ENCODE measurements at regions of chr12 and their contacts with region 1.

Region 1: DNA sequence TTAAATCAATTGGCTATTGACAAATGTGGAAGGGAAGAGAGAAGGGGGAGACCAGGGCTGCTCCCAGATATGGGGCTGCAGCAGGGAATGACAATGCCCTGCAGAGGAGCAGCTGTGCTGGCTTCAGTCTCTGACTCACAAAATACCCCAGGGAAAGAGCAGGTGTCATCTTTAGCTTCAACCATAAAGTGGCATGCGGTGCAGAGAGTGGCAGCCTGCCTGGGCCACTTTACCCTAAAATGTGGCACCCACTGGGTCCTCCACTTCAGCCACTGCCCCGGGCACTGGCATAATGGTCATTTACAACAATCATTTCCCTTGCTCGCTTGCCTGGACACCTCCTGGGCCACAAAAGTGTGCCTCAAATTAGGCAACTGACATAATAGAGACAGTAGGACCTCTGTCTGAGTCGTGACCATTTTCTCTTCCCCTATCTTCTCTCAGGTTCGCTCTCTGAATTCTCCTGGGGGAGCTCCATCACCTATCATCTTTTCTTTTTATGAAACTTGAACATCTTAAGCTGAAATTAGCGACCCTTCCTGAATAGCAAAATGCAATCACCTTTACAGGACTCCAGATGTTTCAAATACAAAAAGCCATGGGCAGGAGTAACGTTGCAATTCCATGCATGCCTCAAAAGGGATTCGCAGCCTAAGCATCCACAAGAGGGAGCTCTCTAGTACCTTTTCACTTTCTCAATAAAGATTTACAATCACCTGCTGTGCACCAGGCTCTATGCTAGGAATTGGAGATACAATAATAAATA is 179.9 kb upstream of the ATF7IP start:
- DNase-seq: peak; percentile 38
- ATAC-seq: peak; percentile 83
- H3K4me3 ChIP-seq: no peak overlapping the region
- H3K27ac ChIP-seq: no peak overlapping the region
- H3K4me1 ChIP-seq: no peaks in the 10 kb centered on the region
- H3K27me3 ChIP-seq: no peaks in the 10 kb centered on the region
- CTCF ChIP-seq: peak; percentile 62
- POLR2A ChIP-seq: no peak
- RAD21 ChIP-seq: peak; percentile 50; the same call in 1 of the 2 replicates

Region 2: DNA sequence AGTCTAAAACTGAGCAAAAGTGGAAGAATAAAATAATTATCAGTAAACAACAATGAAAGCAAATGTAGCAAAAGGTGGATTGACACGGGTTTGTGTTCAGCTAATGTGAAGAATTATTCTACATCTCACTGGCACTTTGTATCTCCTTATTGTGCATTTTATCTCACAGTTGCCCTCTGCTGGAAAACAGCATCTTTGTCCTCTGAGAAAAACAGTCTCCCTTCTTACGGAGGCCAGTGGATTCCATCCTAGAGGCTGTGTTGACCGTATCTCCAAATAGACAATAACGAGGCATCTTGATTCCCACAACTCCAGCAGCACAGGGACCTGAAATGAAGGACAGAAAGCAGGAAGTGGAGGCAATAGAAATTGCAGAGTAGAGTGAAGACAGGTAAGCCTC is 433.4 kb after region 1 on chr12:
- CTCF ChIA-PET with region 1: no interaction called
- POLR2A ChIA-PET with region 1: no interaction called
- dilution Hi-C with region 1: no loop called
- in situ Hi-C with region 1: no loop called
- intact Hi-C with region 1: loop called (anchors 2 kb)
- DNase-seq: peak; percentile 16
- ATAC-seq: peak; percentile 56; the same call in 1 of the 2 replicates
- H3K4me3 ChIP-seq: no peak overlapping the region
- H3K27ac ChIP-seq: no peak overlapping the region
- H3K4me1 ChIP-seq: no peaks in the 10 kb centered on the region
- H3K27me3 ChIP-seq: no peaks in the 10 kb centered on the region
- CTCF ChIP-seq: peak; percentile 42
- POLR2A ChIP-seq: no peak
- RAD21 ChIP-seq: peak; percentile 39; the same call in 1 of the 2 replicates

Region 3: GRCh38 chr12:14664510-14664909 is 478.9 kb after region 1 on chr12:
- CTCF ChIA-PET with region 1: no interaction called
- POLR2A ChIA-PET with region 1: no interaction called
- dilution Hi-C with region 1: no loop called
- in situ Hi-C with region 1: no loop called
- intact Hi-C with region 1: loop called (anchors 1 kb)
- DNase-seq: peak; percentile 35
- ATAC-seq: peak; percentile 72; the same call in 1 of the 2 replicates
- H3K4me3 ChIP-seq: no peak overlapping the region
- H3K27ac ChIP-seq: no peak overlapping the region
- H3K4me1 ChIP-seq: no peaks in the 10 kb centered on the region
- H3K27me3 ChIP-seq: no peaks in the 10 kb centered on the region
- CTCF ChIP-seq: peak; percentile 67
- POLR2A ChIP-seq: no peak
- RAD21 ChIP-seq: peak; percentile 70